ENCODE measurements at regions of chr22 and their contacts with region 1.

Region 1: GRCh38 chr22:37566903-37567820 is 6.9 kb downstream of the CDC42EP1 start:
- DNase-seq: no peak
- H3K4me3 ChIP-seq: no peak overlapping the region
- CTCF ChIP-seq: peak; percentile 83

Region 2: GRCh38 chr22:37394341-37394740 is 172.8 kb before region 1 on chr22:
- CTCF ChIA-PET with region 1: no interaction called
- POLR2A ChIA-PET with region 1: no interaction called
- DNase-seq: no peak
- H3K4me3 ChIP-seq: no peak overlapping the region
- CTCF ChIP-seq: no peak

Region 3: GRCh38 chr22:37544955-37545699 is 22.0 kb before region 1 on chr22:
- CTCF ChIA-PET with region 1: interaction called, 728 read pairs
- POLR2A ChIA-PET with region 1: interaction called, 11 read pairs
- DNase-seq: no peak
- H3K4me3 ChIP-seq: peak overlapping the region; percentile 42
- CTCF ChIP-seq: peak; percentile 87

Region 4: GRCh38 chr22:37581504-37581903 is 14.3 kb after region 1 on chr22:
- CTCF ChIA-PET with region 1: interaction called, 52 read pairs
- POLR2A ChIA-PET with region 1: no interaction called
- DNase-seq: no peak
- H3K4me3 ChIP-seq: no peak overlapping the region
- CTCF ChIP-seq: no peak

Region 5: GRCh38 chr22:37726241-37726887 is 159.2 kb after region 1 on chr22:
- CTCF ChIA-PET with region 1: no interaction called
- POLR2A ChIA-PET with region 1: no interaction called
- DNase-seq: no peak
- H3K4me3 ChIP-seq: no peak overlapping the region
- CTCF ChIP-seq: no peak

Measured in AG04449 (cell line).